Activated CD8-positive, alpha-beta memory T cell treated with anti-CD3 and anti-CD28 coated beads, Interleukin-2, amount 10 ng/mL, durations not matched to agents 7 days and 5 days (primary cell): ENCODE measurements at regions of chr19 and their contacts with region 1.

Region 1: DNA sequence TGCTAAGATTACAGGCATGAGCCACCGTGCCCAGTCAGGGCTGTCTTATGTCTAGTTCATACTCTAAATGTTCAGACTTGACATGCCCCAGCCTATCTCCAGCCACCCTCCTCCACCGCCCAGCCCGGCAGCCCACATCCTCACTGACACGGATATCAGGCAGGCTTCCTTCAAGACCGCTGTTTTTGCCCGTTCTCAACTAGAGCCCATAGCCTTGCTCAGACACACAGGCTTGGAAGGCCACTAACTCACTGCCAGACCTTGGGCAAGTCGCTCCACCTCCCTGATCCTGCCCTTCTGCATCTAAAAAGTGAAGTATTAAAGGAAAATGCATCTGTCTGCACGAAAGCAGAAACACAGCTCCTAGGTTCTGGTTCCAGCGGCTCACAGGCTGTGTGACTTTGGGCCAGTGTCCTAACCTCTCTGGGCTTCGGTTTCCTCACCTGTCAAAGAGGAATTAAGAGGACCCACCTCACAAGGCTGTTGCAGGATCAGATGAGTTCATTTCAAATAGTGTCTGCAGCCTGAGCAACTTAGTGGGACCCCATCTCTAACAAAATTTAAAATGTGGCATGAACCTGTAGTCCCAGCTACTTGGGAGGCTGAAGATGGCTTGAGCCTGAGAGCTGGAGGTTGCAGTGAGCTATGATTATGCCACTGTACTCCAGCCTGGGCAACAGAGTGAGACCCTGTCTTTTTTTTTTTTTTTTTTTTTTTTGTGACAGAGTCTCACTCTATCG is 14.5 kb upstream of the CERS4 start:
- DNase-seq: peak; percentile 90
- ATAC-seq: peak; percentile 82
- H3K4me3 Mint-ChIP-seq: peak overlapping the region; percentile 72
- H3K27ac Mint-ChIP-seq: peak overlapping the region; percentile 98
- H3K4me1 Mint-ChIP-seq: peaks cover 45% of the 10 kb centered on the region
- H3K27me3 Mint-ChIP-seq: no peaks in the 10 kb centered on the region

Region 2: GRCh38 chr19:8208119-8208921 is 13.6 kb after region 1 on chr19:
- CTCF ChIA-PET with region 1: interaction called, 19 read pairs
- DNase-seq: no peak
- ATAC-seq: peak; percentile 5
- H3K4me3 Mint-ChIP-seq: peak overlapping the region; percentile 69
- H3K27ac Mint-ChIP-seq: peak overlapping the region; percentile 34
- H3K4me1 Mint-ChIP-seq: peaks cover 20% of the 10 kb centered on the region
- H3K27me3 Mint-ChIP-seq: peaks cover under 1% of the 10 kb centered on the region

Region 3: DNA sequence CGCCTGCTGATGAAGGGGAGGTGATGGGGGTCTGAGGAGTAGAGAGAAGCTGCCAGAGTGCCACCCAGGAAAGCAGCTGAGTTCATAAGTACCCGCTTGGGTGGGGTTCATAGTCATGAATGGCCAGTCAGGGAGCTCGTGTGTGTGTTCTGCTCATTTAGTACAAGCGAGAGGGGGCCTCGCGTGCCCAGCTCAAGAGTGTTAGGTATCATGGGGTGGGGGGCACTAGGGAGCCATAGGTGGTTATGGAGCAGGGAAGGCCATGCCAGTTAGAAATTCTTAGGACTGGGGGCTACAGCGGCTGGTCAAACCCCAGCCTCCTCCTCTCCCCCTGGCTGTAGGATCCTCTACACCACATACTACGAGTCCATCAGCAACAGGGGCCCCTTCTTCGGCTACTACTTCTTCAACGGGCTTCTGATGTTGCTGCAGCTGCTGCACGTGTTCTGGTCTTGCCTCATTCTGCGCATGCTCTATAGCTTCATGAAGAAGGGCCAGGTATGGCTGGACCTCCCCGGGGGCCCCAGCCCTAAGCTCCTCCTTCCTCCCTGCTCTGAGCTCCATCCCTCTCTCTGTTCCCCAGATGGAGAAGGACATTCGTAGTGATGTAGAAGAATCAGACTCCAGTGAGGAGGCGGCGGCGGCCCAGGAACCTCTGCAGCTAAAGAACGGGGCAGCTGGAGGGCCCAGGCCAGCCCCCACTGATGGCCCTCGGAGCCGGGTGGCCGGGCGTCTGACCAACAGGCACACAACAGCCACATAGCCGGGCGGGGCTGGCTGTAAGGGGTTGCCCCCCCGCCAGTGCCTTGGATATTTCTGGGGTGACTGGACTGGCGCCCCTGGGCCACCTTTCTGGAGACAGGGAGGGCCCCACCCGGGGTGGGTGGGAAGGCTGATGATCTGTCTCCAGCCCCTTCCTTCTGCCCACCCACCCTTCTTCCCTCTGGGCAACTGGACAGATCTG is 66.9 kb after region 1 on chr19:
- CTCF ChIA-PET with region 1: no interaction called
- DNase-seq: no peak
- ATAC-seq: no peak
- H3K4me3 Mint-ChIP-seq: no peak overlapping the region
- H3K27ac Mint-ChIP-seq: no peak overlapping the region
- H3K4me1 Mint-ChIP-seq: peaks cover 15% of the 10 kb centered on the region
- H3K27me3 Mint-ChIP-seq: no peaks in the 10 kb centered on the region